PC-3 (cell line): ENCODE measurements at regions of chr1 and their contacts with region 1.

Region 1: DNA sequence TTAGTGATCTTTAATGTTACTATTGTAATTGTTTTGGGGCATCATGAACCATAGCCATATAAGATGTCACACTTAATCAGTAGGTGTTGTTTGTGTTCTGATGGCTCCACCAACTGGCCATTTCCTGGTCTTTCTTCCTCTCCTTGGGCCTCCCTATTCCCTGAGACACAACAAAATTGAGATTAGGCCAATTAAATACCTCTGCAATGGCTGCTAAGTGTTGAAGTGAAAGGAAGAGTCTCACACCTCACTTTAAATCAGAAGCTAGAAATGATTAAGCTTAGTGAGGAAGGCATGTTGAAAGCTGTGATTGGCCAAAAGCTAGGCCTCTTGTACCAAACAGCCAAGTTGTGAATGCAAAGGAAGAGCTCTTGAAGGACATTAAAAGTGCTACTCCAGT is 30.7 kb downstream of the PPP2R5A start:
- DNase-seq: peak; percentile 65
- ATAC-seq: peak; percentile 87
- H3K4me3 ChIP-seq: no peak overlapping the region
- H3K27ac ChIP-seq: no peak overlapping the region
- H3K4me1 ChIP-seq: no peaks in the 10 kb centered on the region
- H3K27me3 ChIP-seq: no peaks in the 10 kb centered on the region
- CTCF ChIP-seq: peak; percentile 90

Region 2: DNA sequence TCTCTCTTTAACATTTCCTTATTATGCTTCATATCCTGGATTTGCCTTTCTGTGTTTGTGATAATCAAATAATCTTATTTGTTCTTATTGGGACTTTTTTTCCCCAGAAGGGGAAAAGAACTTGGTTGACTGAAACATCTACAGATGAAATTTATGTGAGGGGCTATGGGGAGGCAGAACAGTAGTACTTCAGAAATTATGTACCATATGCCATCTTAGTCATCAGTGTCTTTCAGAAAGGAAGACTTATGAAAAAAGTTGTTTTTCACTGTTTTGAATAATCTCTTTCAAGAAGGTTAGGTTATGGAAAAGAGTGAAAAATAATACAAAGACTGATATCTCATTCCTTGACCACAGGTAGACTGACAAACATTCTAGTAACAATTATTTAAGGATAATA is 1019.5 kb before region 1 on chr1:
- CTCF ChIA-PET with region 1: no interaction called
- POLR2A ChIA-PET with region 1: interaction called, 16 read pairs
- intact Hi-C with region 1: no loop called
- DNase-seq: no peak
- ATAC-seq: no peak
- H3K4me3 ChIP-seq: no peak overlapping the region
- H3K27ac ChIP-seq: no peak overlapping the region
- H3K4me1 ChIP-seq: no peaks in the 10 kb centered on the region
- H3K27me3 ChIP-seq: no peaks in the 10 kb centered on the region
- CTCF ChIP-seq: no peak

Region 3: GRCh38 chr1:212089560-212090163 is 226.2 kb before region 1 on chr1:
- CTCF ChIA-PET with region 1: no interaction called
- POLR2A ChIA-PET with region 1: no interaction called
- intact Hi-C with region 1: loop called (anchors 5 kb)
- DNase-seq: no peak
- ATAC-seq: no peak
- H3K4me3 ChIP-seq: no peak overlapping the region
- H3K27ac ChIP-seq: no peak overlapping the region
- H3K4me1 ChIP-seq: peaks cover 18% of the 10 kb centered on the region
- H3K27me3 ChIP-seq: no peaks in the 10 kb centered on the region
- CTCF ChIP-seq: no peak

Region 4: DNA sequence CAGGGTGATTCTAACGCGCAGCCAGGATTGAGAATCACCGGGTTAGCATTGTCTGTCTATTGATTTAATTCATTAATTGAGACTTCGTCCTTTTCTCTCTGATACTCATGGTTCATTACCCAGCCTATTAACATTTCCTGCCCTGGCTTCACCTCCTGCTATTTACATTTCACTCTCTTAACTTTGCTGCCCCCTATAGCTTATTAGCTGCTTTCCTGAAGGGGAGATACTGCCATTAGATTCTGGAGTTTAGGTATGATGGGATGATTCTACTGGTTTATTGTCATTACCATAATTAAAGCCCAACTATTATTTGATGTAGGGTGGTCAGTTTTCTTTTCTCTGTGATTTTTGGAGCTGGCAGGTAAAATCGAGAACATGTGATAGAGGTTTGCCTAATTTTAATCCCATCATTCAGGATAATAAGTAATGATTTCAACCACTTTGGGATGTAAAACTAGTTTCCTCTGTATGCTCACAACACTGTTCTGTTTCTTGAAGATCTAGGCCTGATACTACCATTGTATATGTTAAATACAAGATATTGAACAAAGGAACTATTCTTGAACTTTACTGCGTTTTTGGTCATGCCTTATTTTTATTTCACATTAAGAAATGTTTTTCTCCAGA is 24.3 kb before region 1 on chr1:
- CTCF ChIA-PET with region 1: interaction called, 5 read pairs
- POLR2A ChIA-PET with region 1: no interaction called
- intact Hi-C with region 1: loop called (anchors 2 kb)
- DNase-seq: peak; percentile 84
- ATAC-seq: peak; percentile 52
- H3K4me3 ChIP-seq: no peak overlapping the region
- H3K27ac ChIP-seq: no peak overlapping the region
- H3K4me1 ChIP-seq: peaks cover 45% of the 10 kb centered on the region
- H3K27me3 ChIP-seq: no peaks in the 10 kb centered on the region
- CTCF ChIP-seq: peak; percentile 99

Region 5: DNA sequence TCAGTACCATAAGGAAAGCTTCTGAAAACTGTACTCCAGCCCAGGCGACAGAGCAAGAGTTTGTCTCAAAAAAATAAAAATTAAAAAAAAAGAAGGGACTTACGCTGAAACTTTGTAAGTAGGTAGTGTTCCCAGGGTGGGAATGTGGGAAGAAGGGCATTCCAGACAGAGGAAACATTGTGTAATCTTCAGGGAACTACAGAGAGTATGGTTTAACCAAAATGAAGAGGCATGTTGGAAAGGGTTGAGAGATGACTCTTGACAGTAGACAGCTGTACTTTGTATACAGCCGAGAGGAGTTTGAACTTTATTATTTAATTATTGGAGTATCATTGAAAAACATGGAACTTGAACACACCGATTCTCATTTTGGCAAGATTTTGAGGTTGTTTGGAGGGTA is 12.3 kb after region 1 on chr1:
- CTCF ChIA-PET with region 1: no interaction called
- POLR2A ChIA-PET with region 1: no interaction called
- intact Hi-C with region 1: no loop called
- DNase-seq: no peak
- ATAC-seq: no peak
- H3K4me3 ChIP-seq: no peak overlapping the region
- H3K27ac ChIP-seq: no peak overlapping the region
- H3K4me1 ChIP-seq: no peaks in the 10 kb centered on the region
- H3K27me3 ChIP-seq: no peaks in the 10 kb centered on the region
- CTCF ChIP-seq: no peak

Region 6: DNA sequence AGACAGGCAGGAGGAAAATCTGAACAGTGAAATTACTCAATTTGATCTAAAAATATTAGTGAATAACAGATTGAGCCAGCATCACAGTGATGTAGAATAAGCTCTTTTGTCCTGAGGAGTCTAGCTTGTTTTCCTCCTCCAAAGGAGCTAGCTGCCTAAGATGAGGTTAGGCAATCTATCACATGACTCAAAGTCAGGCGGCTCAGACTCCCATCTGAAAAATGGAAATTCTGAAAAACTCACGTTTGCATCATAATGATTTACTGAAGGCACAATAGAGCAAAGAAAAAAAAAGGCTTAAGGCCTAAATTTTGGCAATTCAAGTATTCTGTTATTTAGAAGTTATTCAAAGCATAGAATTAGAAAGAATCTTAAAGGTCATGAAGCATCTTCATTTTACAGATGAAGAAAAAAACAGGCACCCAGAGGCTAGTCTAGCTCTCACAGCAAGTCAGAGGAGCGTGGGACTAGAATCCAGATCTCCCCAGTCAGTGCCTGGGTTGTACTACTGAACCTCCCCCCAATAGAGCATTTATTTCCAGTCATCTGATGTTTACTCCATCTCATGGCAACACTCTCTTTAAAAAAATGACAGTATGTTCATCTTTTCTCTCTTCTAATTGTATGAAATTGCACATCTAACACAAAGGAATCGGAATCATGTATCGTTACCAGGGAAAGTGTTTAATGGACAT is 230.2 kb after region 1 on chr1:
- CTCF ChIA-PET with region 1: no interaction called
- POLR2A ChIA-PET with region 1: no interaction called
- intact Hi-C with region 1: no loop called
- DNase-seq: no peak
- ATAC-seq: no peak
- H3K4me3 ChIP-seq: no peak overlapping the region
- H3K27ac ChIP-seq: no peak overlapping the region
- H3K4me1 ChIP-seq: no peaks in the 10 kb centered on the region
- H3K27me3 ChIP-seq: peaks cover 10% of the 10 kb centered on the region; the same call in 1 of the 2 replicates
- CTCF ChIP-seq: no peak

Region 7: GRCh38 chr1:212595787-212596714 is 280.1 kb after region 1 on chr1:
- CTCF ChIA-PET with region 1: no interaction called
- POLR2A ChIA-PET with region 1: no interaction called
- intact Hi-C with region 1: no loop called
- DNase-seq: peak; percentile 100
- ATAC-seq: peak; percentile 89
- H3K4me3 ChIP-seq: peak overlapping the region; percentile 46
- H3K27ac ChIP-seq: peak overlapping the region; percentile 80
- H3K4me1 ChIP-seq: peaks cover 45% of the 10 kb centered on the region
- H3K27me3 ChIP-seq: no peaks in the 10 kb centered on the region
- CTCF ChIP-seq: peak; percentile 99

Region 8: GRCh38 chr1:212847549-212847948 is 531.6 kb after region 1 on chr1 and contains the start of gene SPATA45:
- CTCF ChIA-PET with region 1: no interaction called
- POLR2A ChIA-PET with region 1: no interaction called
- intact Hi-C with region 1: no loop called
- DNase-seq: no peak
- ATAC-seq: no peak
- H3K4me3 ChIP-seq: no peak within 1 kb of the TSS
- H3K27ac ChIP-seq: no peak within 1 kb of the TSS
- H3K4me1 ChIP-seq: no peaks in the 10 kb centered on the region
- H3K27me3 ChIP-seq: no peaks in the 10 kb centered on the region
- CTCF ChIP-seq: no peak
- total RNA-seq, gene SPATA45: not detected in 2 replicates